HepG2 (cell line): ENCODE measurements at regions of chr2 and their contacts with region 1.

Region 1: DNA sequence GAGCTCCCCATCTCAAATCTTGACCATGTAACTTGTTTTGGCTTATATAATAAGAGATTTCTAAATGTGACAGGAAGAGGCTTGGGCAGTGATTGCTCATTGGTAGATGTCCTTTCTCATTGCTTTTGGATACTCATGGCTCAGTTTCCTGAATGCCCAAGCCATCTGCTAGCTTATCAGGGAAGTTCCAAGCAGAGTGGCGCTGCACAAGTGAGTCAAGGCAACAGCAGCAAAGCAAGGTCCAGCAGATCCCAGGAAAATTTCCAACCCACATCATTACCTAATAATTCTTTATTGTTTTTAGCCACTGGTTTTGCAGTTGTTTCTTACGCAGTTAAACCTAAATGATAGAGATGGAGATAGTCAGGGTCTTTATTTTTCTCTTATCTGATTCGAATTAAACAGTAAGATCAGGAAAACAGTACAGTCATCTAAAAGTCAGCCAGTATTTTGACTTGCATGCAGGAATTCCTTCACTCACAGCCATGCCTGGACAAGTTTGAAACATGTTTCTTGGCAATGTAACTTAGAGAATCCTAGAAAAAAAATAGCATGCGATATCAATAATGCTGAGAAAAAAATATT is 349.7 kb upstream of the TMEFF2 start:
- DNase-seq: no peak
- ATAC-seq: no peak
- H3K4me3 ChIP-seq: no peak overlapping the region
- H3K27ac ChIP-seq: no peak overlapping the region
- H3K4me1 ChIP-seq: no peaks in the 10 kb centered on the region
- H3K27me3 ChIP-seq: no peaks in the 10 kb centered on the region
- CTCF ChIP-seq: no peak
- EP300 ChIP-seq: no peak
- POLR2A ChIP-seq: no peak
- RAD21 ChIP-seq: no peak

Region 2: DNA sequence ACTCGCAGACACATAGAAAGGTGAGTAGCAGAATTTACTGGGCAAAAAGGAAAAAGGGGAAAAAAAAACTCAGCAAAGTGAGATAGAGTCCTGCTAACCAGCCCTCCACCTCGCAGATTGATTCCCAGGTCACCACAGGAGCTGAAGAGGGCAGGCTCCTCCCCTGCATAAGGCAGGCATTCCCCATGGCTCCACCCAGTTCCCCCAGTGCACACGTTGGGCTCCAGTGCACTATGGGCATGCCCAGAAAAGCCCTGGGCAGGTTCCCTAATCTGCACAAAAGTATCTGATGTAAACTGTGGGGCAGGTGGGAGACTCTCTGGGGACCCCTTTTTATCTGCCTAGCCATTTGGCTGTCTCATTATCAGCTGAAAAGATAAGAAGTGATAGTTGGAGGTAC is 111.5 kb after region 1 on chr2:
- CTCF ChIA-PET with region 1: no interaction called
- POLR2A ChIA-PET with region 1: no interaction called
- in situ Hi-C with region 1: no loop called
- intact Hi-C with region 1: no loop called
- DNase-seq: no peak
- ATAC-seq: peak; percentile 54; the same call in 2 of the 3 replicates
- H3K4me3 ChIP-seq: no peak overlapping the region
- H3K27ac ChIP-seq: no peak overlapping the region
- H3K4me1 ChIP-seq: no peaks in the 10 kb centered on the region
- H3K27me3 ChIP-seq: no peaks in the 10 kb centered on the region
- CTCF ChIP-seq: no peak
- EP300 ChIP-seq: no peak
- POLR2A ChIP-seq: no peak
- RAD21 ChIP-seq: no peak

Region 3: GRCh38 chr2:192932376-192932775 is 387.9 kb after region 1 on chr2:
- CTCF ChIA-PET with region 1: no interaction called
- POLR2A ChIA-PET with region 1: no interaction called
- in situ Hi-C with region 1: no loop called
- intact Hi-C with region 1: loop called (anchors 10 kb)
- DNase-seq: no peak
- ATAC-seq: no peak
- H3K4me3 ChIP-seq: no peak overlapping the region
- H3K27ac ChIP-seq: no peak overlapping the region
- H3K4me1 ChIP-seq: no peaks in the 10 kb centered on the region
- H3K27me3 ChIP-seq: no peaks in the 10 kb centered on the region; a peak in 1 of 5 replicates
- CTCF ChIP-seq: no peak
- EP300 ChIP-seq: no peak
- POLR2A ChIP-seq: no peak
- RAD21 ChIP-seq: no peak